GM10248 (cell line): ENCODE measurements at regions of chr15 and their contacts with region 1.

Region 1: GRCh38 chr15:79896637-79897379 is at the start of gene MTHFS:
- DNase-seq: peak; percentile 83
- CTCF ChIP-seq: peak; percentile 56

Region 2: DNA sequence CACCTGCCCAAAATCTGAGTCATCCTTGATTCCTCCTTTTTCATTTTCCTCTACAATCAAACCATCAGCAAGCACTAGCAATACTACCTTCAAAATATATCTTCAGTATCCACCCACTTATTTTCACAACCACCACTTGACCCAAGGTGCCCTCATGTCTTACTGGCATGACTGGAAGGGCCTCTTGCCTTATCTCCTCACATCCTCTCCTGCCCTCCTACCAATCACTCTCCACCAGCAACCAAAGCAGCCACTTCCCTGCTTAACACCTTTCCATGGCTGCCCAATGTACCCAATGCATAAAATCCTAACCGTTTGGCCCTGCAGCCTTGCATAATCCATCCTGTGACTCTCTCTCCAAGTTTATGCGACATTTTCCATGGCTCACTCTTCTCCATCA is 76.0 kb before region 1 on chr15:
- CTCF ChIA-PET with region 1: no interaction called
- POLR2A ChIA-PET with region 1: no interaction called
- DNase-seq: no peak
- CTCF ChIP-seq: no peak

Region 3: DNA sequence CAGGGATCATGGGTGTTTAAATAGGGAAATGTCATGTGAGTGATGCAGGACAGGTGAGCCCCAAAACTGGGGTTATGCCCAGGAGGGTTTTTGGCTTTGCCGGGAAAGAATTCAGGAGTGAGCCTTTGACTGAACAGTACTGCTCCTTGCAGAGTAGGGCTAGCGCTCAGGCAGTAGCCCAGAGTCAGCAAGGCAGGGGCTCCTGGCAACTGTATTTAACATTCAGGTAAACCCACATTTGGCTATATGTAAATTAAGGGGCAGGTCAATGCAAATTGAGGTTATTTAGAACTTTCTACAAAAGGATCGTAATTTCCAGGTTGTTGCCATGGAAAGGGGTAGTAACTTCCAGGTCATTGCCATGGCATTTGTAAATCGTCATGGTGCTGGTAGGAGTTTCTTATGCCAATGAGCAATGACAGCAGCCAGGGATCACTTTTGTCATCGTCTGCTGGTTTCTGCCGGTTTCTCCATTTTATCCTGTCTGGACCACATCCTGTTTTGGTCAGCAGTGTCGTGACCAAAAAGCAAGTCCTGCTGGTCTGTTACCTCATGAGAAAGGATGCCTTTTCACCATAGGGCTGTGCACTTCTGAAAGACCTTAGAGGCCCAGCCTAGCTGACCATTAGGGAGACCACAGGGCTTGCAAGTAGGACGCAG is 24.3 kb before region 1 on chr15:
- CTCF ChIA-PET with region 1: interaction called, 14 read pairs
- POLR2A ChIA-PET with region 1: no interaction called
- DNase-seq: no peak
- CTCF ChIP-seq: no peak

Region 4: DNA sequence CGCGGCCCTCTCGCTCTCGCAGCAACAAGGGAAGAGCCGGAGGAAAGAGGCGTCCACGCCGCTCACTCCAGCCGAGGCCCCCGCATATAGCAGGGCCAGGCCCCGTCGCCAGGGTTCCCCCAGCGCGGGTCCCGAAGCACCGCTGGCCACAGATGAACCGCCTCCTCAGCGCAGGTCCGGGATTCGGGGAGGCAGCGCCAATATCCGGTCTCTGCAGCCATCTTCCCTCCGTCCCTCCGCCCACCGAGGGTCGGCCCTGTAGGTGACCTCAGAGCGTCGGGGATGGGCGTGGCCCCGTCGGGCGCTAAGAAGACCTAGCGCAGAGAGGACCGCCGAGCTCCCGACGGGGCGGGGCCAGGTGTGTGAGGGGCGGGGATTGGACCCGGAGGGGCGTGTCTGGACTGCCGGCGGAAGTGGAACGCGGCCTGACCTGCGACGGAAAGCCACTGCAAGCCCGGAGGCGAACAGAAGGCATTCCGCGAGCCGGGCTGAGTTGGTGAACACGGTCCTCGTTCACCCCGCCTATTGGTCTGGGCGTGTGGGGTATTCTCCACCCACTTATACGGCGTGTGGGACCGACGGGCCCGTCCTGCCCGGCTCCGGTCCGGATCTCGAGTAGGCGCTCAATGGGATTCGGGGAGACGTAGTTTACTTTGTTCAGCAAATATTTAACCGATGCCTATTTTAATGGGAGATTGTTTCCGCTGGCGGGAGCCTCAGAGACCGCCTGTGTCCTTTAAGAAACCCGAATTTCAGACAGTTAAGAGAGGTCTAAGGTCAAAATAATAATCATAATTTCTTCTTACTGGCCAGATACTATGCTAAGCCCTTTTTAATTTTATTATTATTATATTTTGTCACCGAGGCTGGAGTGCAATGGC is 26.9 kb after region 1 on chr15:
- CTCF ChIA-PET with region 1: interaction called, 16 read pairs
- POLR2A ChIA-PET with region 1: interaction called, 3 read pairs
- DNase-seq: peak; percentile 99
- CTCF ChIP-seq: no peak

Region 5: GRCh38 chr15:79989682-79990081 is 92.9 kb after region 1 on chr15:
- CTCF ChIA-PET with region 1: interaction called, 12 read pairs
- POLR2A ChIA-PET with region 1: no interaction called
- DNase-seq: no peak
- CTCF ChIP-seq: no peak

Region 6: DNA sequence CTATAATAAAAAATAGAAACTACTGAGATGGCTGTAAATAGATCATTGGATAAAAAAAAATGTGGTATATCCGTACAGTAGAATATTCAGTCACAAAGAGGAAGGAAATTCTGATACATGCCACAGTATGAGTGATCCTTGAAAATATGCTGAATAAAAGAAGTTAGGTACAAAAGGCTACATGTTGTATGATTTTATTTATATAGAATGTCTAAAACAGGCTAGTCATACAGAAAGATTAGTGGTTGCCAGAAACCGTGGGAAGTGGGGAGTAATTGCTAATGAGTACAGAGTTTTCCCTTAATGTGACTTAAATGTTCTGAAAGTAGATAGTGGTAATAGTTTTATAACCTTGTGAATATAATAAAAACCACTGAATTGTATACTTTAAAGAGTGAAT is 231.1 kb after region 1 on chr15:
- CTCF ChIA-PET with region 1: no interaction called
- POLR2A ChIA-PET with region 1: no interaction called
- DNase-seq: no peak
- CTCF ChIP-seq: no peak